Caco-2 (cell line): ENCODE measurements at regions of chr10 and their contacts with region 1.

Region 1: GRCh38 chr10:131053192-131053591 is 258.3 kb downstream of the TCERG1L start:
- DNase-seq: no peak
- H3K4me3 ChIP-seq: no peak overlapping the region
- H3K4me3 Mint-ChIP-seq: no peak overlapping the region
- H3K27ac Mint-ChIP-seq: no peak overlapping the region
- H3K4me1 ChIP-seq: no peaks in the 10 kb centered on the region
- H3K4me1 Mint-ChIP-seq: no peaks in the 10 kb centered on the region
- H3K27me3 ChIP-seq: no peaks in the 10 kb centered on the region
- H3K27me3 Mint-ChIP-seq: no peaks in the 10 kb centered on the region
- CTCF ChIP-seq: no peak

Region 2: GRCh38 chr10:131043039-131043691 is 10.0 kb before region 1 on chr10:
- CTCF ChIA-PET with region 1: no interaction called
- POLR2A ChIA-PET with region 1: no interaction called
- intact Hi-C with region 1: no loop called
- DNase-seq: no peak
- H3K4me3 ChIP-seq: no peak overlapping the region
- H3K4me3 Mint-ChIP-seq: no peak overlapping the region
- H3K27ac Mint-ChIP-seq: no peak overlapping the region
- H3K4me1 ChIP-seq: no peaks in the 10 kb centered on the region
- H3K4me1 Mint-ChIP-seq: no peaks in the 10 kb centered on the region
- H3K27me3 ChIP-seq: no peaks in the 10 kb centered on the region
- H3K27me3 Mint-ChIP-seq: no peaks in the 10 kb centered on the region
- CTCF ChIP-seq: no peak

Region 3: GRCh38 chr10:131125511-131126225 is 72.5 kb after region 1 on chr10:
- CTCF ChIA-PET with region 1: no interaction called
- POLR2A ChIA-PET with region 1: no interaction called
- intact Hi-C with region 1: loop called (anchors 2 kb)
- DNase-seq: peak in 1 of 2 experiments; percentile 12
- H3K4me3 ChIP-seq: no peak overlapping the region
- H3K4me3 Mint-ChIP-seq: no peak overlapping the region
- H3K27ac Mint-ChIP-seq: no peak overlapping the region
- H3K4me1 ChIP-seq: no peaks in the 10 kb centered on the region
- H3K4me1 Mint-ChIP-seq: no peaks in the 10 kb centered on the region
- H3K27me3 ChIP-seq: no peaks in the 10 kb centered on the region
- H3K27me3 Mint-ChIP-seq: peaks cover 2% of the 10 kb centered on the region
- CTCF ChIP-seq: no peak